ENCODE measurements at regions of chr9 and their contacts with region 1.

Region 1: GRCh38 chr9:26892251-26893029 is at the start of gene CAAP1:
- DNase-seq: peak; percentile 91 to 96 (median 92)
- H3K4me3 ChIP-seq: peak within 1 kb of the TSS; percentile 82
- H3K27ac ChIP-seq: peak within 1 kb of the TSS; percentile 47 to 94
- H3K4me1 ChIP-seq: peaks cover 2% of the 10 kb centered on the region
- H3K27me3 ChIP-seq: no peaks in the 10 kb centered on the region
- CTCF ChIP-seq: peak in 2 of 3 donors; percentile 22 to 45
- EP300 ChIP-seq: no peak
- POLR2A ChIP-seq: peak; percentile 56
- total RNA-seq, gene CAAP1: 8.5 to 15.0 (median 10.5) TPM

Region 2: GRCh38 chr9:26946753-26947727 is 54.6 kb after region 1 on chr9 and contains the start of gene PLAA:
- intact Hi-C with region 1: loop called in 1 of 4 experiments (anchors 5 kb)
- DNase-seq: peak; percentile 85 to 91 (median 89)
- H3K4me3 ChIP-seq: peak within 1 kb of the TSS; percentile 74
- H3K27ac ChIP-seq: peak within 1 kb of the TSS; percentile 88 to 92
- H3K4me1 ChIP-seq: peaks cover 4% of the 10 kb centered on the region
- H3K27me3 ChIP-seq: no peaks in the 10 kb centered on the region
- CTCF ChIP-seq: no peak
- EP300 ChIP-seq: peak; percentile 10
- POLR2A ChIP-seq: peak; percentile 10
- total RNA-seq, gene PLAA: 13.6 to 25.2 (median 20.2) TPM

Measured in ovary (tissue), 10 donors.